ENCODE measurements at regions of chr4 and their contacts with region 1.

Region 1: GRCh38 chr4:2963175-2963965 is at the starts of genes GRK4 and NOP14:
- DNase-seq: peak; percentile 100
- H3K4me3 ChIP-seq: peak within 1 kb of the TSS; percentile 83
- H3K27ac ChIP-seq: peak within 1 kb of the TSS; percentile 69
- H3K4me1 ChIP-seq: peaks cover 22% of the 10 kb centered on the region
- CTCF ChIP-seq: peak; percentile 39; the same call in 1 of the 2 replicates
- total RNA-seq, gene GRK4: 5.3 and 6.5 TPM in 2 replicates
- total RNA-seq, gene NOP14: 31.7 and 35.9 TPM in 2 replicates

Region 2: GRCh38 chr4:2761035-2761923 is 202.1 kb before region 1 on chr4:
- CTCF ChIA-PET with region 1: no interaction called
- POLR2A ChIA-PET with region 1: interaction called, 6 read pairs
- intact Hi-C with region 1: loop called (anchors 2 kb)
- DNase-seq: no peak
- H3K4me3 ChIP-seq: no peak overlapping the region
- H3K27ac ChIP-seq: no peak overlapping the region
- H3K4me1 ChIP-seq: peaks cover 12% of the 10 kb centered on the region
- CTCF ChIP-seq: no peak

Region 3: GRCh38 chr4:3074078-3074795 is 110.9 kb after region 1 on chr4 and contains the starts of genes HTT and HTT-AS:
- CTCF ChIA-PET with region 1: interaction called, 5 read pairs
- POLR2A ChIA-PET with region 1: interaction called, 3 read pairs
- intact Hi-C with region 1: loop called (anchors 2 kb)
- DNase-seq: peak; percentile 96
- H3K4me3 ChIP-seq: peak within 1 kb of the TSS; percentile 100
- H3K27ac ChIP-seq: peak within 1 kb of the TSS; percentile 82
- H3K4me1 ChIP-seq: peaks cover 34% of the 10 kb centered on the region
- CTCF ChIP-seq: no peak
- total RNA-seq, gene HTT: 36.4 and 41.2 TPM in 2 replicates
- total RNA-seq, gene HTT-AS: not detected in 2 replicates

Measured in OCI-LY7 (cell line).